ENCODE measurements at regions of chr1 and their contacts with region 1.

Region 1: DNA sequence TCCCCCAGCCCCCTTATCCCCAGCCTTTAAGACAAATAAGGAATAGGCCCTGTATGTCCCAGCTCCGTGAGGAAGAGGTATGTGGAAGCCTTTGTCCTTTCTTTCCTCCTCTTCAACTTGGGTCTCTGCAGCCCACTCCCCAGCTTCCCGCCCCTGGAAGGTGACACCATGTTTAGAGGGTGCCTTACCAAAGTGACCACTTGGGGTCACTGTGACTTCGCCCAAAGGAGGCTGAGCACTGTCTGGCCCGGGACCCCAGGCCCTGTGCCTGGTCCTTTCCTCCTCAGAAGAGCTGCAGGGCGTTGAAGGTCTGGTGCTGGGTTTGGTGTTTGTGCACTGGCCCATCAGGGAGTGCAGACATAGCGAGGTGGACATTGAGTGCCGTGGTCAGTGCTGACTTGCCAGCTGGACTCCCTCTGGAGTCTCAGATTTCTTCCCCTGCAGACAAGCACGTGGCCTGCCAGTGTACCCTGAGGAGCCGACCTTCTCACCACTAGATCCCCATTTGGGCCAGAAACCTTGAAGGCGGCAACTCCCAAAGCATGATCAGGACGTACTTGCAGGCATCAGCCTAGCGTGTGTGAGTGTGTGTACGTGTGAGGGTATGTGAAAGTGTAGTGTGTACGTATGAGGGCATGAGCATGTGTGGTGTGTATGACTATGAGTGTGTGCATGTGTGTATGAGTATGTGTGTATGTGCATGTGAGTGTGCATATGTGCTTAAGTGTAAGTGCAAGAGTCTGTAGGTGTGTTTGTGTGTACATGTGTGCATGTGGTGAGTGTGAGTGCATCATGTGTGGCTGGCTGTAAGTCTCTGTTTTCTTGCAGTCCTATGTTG is 181.4 kb upstream of the KIAA0040 start:
- DNase-seq: peak; percentile 50 to 71 (median 54)
- ATAC-seq: peak; percentile 84
- H3K4me3 ChIP-seq: no peak overlapping the region
- H3K27ac ChIP-seq: no peak overlapping the region
- H3K4me1 ChIP-seq: peaks cover 6% of the 10 kb centered on the region
- H3K27me3 ChIP-seq: no peaks in the 10 kb centered on the region
- CTCF ChIP-seq: peak; percentile 69 to 88 (median 77)
- POLR2A ChIP-seq: no peak

Region 2: GRCh38 chr1:175555266-175555665 is 181.3 kb after region 1 on chr1:
- intact Hi-C with region 1: no loop called
- DNase-seq: no peak
- ATAC-seq: no peak
- H3K4me3 ChIP-seq: no peak overlapping the region
- H3K27ac ChIP-seq: no peak overlapping the region
- H3K4me1 ChIP-seq: no peaks in the 10 kb centered on the region
- H3K27me3 ChIP-seq: no peaks in the 10 kb centered on the region
- CTCF ChIP-seq: no peak
- POLR2A ChIP-seq: no peak

Region 3: DNA sequence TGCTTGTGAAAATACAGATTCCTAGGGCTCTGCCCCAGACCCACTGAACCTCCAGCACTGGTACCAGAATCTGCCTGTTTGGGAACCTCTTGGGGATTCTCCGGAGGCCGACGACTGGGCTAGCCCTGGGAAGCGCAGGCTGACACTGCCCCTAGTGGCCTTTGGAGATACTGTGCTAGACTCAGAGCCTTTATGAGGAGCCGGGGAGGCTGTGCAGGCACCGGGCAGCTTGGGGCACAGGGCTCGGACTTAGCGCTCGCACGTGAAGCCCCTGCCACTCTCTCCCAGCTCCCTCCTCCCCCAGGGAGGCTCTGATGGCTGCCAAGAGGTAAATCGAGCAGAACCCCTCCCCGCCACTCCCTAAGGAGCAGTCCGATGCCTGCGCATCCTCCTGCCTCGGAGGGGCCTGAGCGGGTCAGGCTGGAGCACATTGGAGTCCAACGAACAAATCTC is 514.0 kb after region 1 on chr1:
- intact Hi-C with region 1: loop called (anchors 10 kb)
- DNase-seq: peak; percentile 61 to 70 (median 64)
- ATAC-seq: peak; percentile 77
- H3K4me3 ChIP-seq: no peak overlapping the region
- H3K27ac ChIP-seq: no peak overlapping the region
- H3K4me1 ChIP-seq: no peaks in the 10 kb centered on the region
- H3K27me3 ChIP-seq: no peaks in the 10 kb centered on the region
- CTCF ChIP-seq: peak; percentile 46 to 74 (median 68)
- POLR2A ChIP-seq: no peak